Transverse colon (tissue), 4 donors: ENCODE measurements at regions of chr4 and their contacts with region 1.

Region 1: GRCh38 chr4:15976456-15977447 is 13.8 kb upstream of the FGFBP2 start:
- DNase-seq: no peak
- H3K4me3 ChIP-seq: no peak overlapping the region
- H3K27ac ChIP-seq: no peak overlapping the region
- H3K4me1 ChIP-seq: no peaks in the 10 kb centered on the region
- H3K27me3 ChIP-seq: no peaks in the 10 kb centered on the region
- CTCF ChIP-seq: no peak
- EP300 ChIP-seq: no peak
- POLR2A ChIP-seq: no peak

Region 2: DNA sequence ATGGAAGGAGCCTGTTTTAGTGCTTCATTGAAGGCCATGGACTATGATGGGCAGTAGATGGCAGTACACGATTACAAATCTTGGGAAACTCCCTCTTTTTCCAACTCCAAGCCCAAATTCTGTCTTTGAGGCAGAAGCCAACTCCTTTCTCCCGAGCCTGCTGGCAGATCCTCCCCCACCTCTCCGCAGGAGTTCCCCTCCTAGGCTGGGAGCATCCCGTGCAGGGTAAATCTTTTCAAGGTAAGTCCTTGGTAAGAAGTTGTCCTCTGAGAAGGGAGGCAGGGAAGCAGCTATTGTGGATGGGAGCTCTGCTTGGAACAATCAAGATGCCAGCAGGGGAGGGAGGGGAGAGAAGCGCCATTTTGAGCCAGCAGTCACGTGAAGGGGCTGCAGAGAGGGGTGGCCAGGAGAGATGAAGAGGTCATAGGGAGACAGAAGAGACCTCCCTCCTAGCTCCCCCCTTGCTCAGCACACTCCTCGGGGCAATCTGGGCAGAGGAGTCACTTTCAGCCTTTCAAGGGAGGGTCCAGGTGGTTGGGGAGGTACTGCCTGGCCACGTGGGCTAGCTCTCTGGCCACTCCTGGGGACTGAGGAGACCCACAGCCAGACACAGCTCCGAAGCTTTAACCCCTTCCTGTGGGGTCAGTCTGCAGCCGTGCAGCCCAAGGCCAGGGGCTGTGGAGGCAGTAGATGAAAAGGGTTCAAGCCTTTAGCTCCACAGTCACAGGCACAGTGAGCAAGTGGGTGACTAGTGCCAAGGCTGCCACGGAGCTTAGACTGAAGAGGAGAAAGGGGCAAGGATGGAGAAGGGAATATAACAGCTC is 497.5 kb before region 1 on chr4:
- in situ Hi-C with region 1: loop called in 2 of 4 experiments (anchors 25 kb)
- intact Hi-C with region 1: no loop called
- DNase-seq: no peak
- H3K4me3 ChIP-seq: peak overlapping the region in 3 of 4 donors; percentile 17 to 35 (median 21)
- H3K27ac ChIP-seq: peak overlapping the region; percentile 57 to 83 (median 82)
- H3K4me1 ChIP-seq: peaks cover 0 to 8% (median 6%) of the 10 kb centered on the region in 4 donors
- H3K27me3 ChIP-seq: no peaks in the 10 kb centered on the region
- CTCF ChIP-seq: peak; percentile 40 to 58 (median 50)
- EP300 ChIP-seq: no peak
- POLR2A ChIP-seq: no peak

Region 3: GRCh38 chr4:15882675-15883086 is 94.1 kb before region 1 on chr4:
- in situ Hi-C with region 1: no loop called
- intact Hi-C with region 1: no loop called
- DNase-seq: peak; percentile 33
- H3K4me3 ChIP-seq: no peak overlapping the region
- H3K27ac ChIP-seq: no peak overlapping the region
- H3K4me1 ChIP-seq: peaks cover 3 to 18% (median 12%) of the 10 kb centered on the region in 4 donors
- H3K27me3 ChIP-seq: no peaks in the 10 kb centered on the region
- CTCF ChIP-seq: peak; percentile 85 to 94 (median 88)
- EP300 ChIP-seq: no peak
- POLR2A ChIP-seq: no peak